Activated T-helper 1 cell treated with anti-CD3 and anti-CD28 coated beads, Interleukin-12 subunit alpha, Interleukin-12 subunit beta, Interleukin-2, Interleukin-4 antibody, amounts not matched to agents 30 ng/mL and 10 ng/mL and 1 ng/mL, durations not matched to agents 14 hours and 24 hours and 36 hours (primary cell): ENCODE measurements at regions of chr3 and their contacts with region 1.

Region 1: GRCh38 chr3:20104167-20104661 is 64.0 kb downstream of the KAT2B start:
- DNase-seq: peak; percentile 52
- H3K4me3 Mint-ChIP-seq: peak overlapping the region; percentile 52
- H3K27ac Mint-ChIP-seq: peak overlapping the region; percentile 93
- H3K4me1 Mint-ChIP-seq: peaks cover 79% of the 10 kb centered on the region
- H3K27me3 Mint-ChIP-seq: no peaks in the 10 kb centered on the region

Region 2: GRCh38 chr3:19946832-19947548 is 157.2 kb before region 1 on chr3 and contains the start of gene RAB5A:
- intact Hi-C with region 1: loop called (anchors 1 kb)
- DNase-seq: peak; percentile 96
- H3K4me3 Mint-ChIP-seq: peak within 1 kb of the TSS; percentile 92
- H3K27ac Mint-ChIP-seq: peak within 1 kb of the TSS; percentile 97
- H3K4me1 Mint-ChIP-seq: peaks cover 47% of the 10 kb centered on the region
- H3K27me3 Mint-ChIP-seq: no peaks in the 10 kb centered on the region
- total RNA-seq, gene RAB5A: 62.2 and 64.0 TPM in 2 replicates

Region 3: DNA sequence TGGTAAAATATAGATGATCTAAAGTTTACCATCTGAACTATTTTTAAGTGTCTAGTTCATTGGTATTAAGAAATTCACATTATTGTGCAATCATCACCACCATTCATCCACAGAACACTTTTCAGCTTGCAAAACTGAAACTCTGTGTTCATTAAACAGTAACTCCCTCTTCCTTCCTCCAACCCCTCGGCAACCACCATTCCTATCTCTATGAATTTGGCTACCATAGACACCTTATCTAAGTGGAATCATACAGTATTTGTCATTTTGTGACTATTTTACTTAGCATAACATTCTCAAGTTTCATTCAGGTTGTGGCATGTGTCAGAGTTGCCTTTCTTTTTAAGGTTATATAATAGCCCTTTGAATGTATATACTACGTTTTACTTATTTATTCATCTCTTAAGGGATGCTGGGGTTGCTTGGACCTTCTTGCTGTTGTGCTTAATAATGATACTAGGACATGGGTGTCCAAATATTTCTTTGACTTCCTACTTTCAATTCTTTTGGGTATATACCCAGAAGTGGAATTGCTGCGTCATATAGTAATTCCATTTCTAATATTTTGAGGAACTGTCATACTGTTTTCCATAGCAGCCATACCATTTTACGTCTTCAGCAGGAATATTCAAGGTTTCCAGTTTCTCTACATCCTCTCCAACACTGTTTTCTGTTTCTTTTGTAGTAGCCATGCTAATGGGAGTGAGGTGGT is 43.1 kb before region 1 on chr3:
- intact Hi-C with region 1: loop called (anchors 1 kb)
- DNase-seq: no peak
- H3K4me3 Mint-ChIP-seq: no peak overlapping the region
- H3K27ac Mint-ChIP-seq: peak overlapping the region; percentile 73
- H3K4me1 Mint-ChIP-seq: peaks cover 40% of the 10 kb centered on the region
- H3K27me3 Mint-ChIP-seq: no peaks in the 10 kb centered on the region

Region 4: DNA sequence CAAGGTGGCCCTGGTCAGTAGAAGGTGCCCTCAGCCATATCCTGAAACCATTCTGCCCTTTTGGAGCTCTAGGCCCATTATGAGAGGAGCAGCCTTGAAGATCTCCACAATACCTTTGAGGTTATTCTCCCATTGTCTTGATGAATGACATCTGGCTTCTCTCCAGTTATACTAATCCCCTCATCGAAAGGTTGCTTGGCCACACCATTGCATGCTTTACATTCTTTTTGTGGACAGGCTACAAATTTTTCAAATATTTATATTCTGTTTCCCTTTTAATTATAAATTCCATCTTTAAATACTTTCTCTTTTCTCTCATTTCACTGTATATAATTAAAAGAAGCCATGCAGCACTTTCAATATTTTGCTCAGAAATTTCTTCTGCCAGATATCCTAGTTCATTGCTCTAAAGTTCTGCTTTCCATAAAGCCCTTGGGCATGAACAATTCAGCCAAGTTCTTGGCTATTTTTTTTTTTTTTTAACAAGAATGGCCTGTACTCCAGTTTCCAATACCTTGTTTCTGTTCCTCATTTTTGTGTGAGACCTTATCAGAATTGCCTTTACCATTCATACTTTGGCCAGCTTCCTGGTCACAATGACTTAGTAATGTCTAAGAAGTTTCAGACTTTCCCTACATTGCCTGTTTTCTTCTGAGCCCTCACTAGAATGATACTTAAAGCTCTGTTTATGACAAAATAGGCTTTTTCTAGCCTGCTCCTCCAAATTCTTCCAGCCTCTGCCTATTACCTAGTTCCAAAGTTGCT is 220.7 kb after region 1 on chr3:
- intact Hi-C with region 1: no loop called
- DNase-seq: no peak
- H3K4me3 Mint-ChIP-seq: no peak overlapping the region
- H3K27ac Mint-ChIP-seq: no peak overlapping the region
- H3K4me1 Mint-ChIP-seq: no peaks in the 10 kb centered on the region
- H3K27me3 Mint-ChIP-seq: no peaks in the 10 kb centered on the region